ENCODE measurements at regions of chr1 and their contacts with region 1.

Region 1: DNA sequence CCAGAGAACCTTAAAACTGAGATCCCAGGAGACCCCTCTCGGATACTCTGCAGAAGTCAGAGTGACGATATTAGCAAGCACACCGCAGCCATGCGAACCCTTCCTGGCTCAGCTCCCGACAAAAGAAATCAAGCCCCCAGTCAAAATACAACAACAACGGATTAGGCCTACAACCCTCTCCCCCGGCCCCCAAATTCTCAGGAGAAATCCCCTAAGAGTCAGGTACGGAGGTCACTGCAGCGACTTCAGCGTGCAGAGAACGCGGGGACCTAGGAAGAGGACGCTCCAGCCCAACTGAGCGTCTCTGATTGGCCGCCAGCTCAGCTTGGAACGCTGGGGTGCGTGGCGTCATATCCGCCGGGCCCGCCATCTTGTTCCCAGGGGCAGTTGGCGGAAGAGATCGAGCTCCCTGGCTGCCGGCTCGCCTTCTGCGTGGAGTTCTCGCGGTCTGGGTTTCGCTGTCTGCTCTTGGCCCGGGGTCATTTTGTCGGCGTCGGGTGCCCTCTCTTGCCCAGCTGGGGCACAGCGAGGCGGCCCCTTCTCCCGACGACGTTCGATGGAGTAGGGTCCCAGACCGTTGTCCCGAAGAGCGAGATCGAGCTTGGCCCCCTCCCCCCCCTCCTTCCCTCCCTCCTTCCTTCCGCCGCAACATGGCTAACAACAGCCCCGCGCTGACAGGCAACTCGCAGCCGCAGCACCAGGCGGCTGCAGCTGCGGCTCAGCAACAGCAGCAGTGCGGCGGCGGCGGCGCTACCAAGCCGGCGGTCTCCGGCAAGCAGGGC is at the start of gene PRPF38B:
- DNase-seq: peak; percentile 97
- H3K4me3 Mint-ChIP-seq: peak within 1 kb of the TSS; percentile 86
- H3K27ac Mint-ChIP-seq: peak within 1 kb of the TSS; percentile 98
- H3K4me1 Mint-ChIP-seq: peaks cover 37% of the 10 kb centered on the region
- H3K27me3 Mint-ChIP-seq: no peaks in the 10 kb centered on the region
- total RNA-seq, gene PRPF38B: 50.4 to 52.2 TPM

Region 2: GRCh38 chr1:108512239-108512981 is 179.7 kb before region 1 on chr1:
- CTCF ChIA-PET with region 1: no interaction called
- intact Hi-C with region 1: loop called (anchors 5 kb)
- DNase-seq: no peak
- H3K4me3 Mint-ChIP-seq: no peak overlapping the region
- H3K27ac Mint-ChIP-seq: no peak overlapping the region
- H3K4me1 Mint-ChIP-seq: no peaks in the 10 kb centered on the region
- H3K27me3 Mint-ChIP-seq: peaks cover 1% of the 10 kb centered on the region

Region 3: GRCh38 chr1:108643492-108644335 is 48.4 kb before region 1 on chr1:
- CTCF ChIA-PET with region 1: interaction called, 28 read pairs
- intact Hi-C with region 1: loop called (anchors 1 kb)
- DNase-seq: peak; percentile 71
- H3K4me3 Mint-ChIP-seq: no peak overlapping the region
- H3K27ac Mint-ChIP-seq: no peak overlapping the region
- H3K4me1 Mint-ChIP-seq: peaks cover 60% of the 10 kb centered on the region
- H3K27me3 Mint-ChIP-seq: no peaks in the 10 kb centered on the region

Region 4: GRCh38 chr1:108746372-108747205 is 54.5 kb after region 1 on chr1 and contains the start of gene STXBP3:
- CTCF ChIA-PET with region 1: no interaction called
- intact Hi-C with region 1: loop called (anchors 1 kb)
- DNase-seq: peak; percentile 100
- H3K4me3 Mint-ChIP-seq: peak within 1 kb of the TSS; percentile 94
- H3K27ac Mint-ChIP-seq: peak within 1 kb of the TSS; percentile 92
- H3K4me1 Mint-ChIP-seq: peaks cover 28% of the 10 kb centered on the region
- H3K27me3 Mint-ChIP-seq: no peaks in the 10 kb centered on the region
- total RNA-seq, gene STXBP3: 29.1 to 30.3 TPM

Region 5: DNA sequence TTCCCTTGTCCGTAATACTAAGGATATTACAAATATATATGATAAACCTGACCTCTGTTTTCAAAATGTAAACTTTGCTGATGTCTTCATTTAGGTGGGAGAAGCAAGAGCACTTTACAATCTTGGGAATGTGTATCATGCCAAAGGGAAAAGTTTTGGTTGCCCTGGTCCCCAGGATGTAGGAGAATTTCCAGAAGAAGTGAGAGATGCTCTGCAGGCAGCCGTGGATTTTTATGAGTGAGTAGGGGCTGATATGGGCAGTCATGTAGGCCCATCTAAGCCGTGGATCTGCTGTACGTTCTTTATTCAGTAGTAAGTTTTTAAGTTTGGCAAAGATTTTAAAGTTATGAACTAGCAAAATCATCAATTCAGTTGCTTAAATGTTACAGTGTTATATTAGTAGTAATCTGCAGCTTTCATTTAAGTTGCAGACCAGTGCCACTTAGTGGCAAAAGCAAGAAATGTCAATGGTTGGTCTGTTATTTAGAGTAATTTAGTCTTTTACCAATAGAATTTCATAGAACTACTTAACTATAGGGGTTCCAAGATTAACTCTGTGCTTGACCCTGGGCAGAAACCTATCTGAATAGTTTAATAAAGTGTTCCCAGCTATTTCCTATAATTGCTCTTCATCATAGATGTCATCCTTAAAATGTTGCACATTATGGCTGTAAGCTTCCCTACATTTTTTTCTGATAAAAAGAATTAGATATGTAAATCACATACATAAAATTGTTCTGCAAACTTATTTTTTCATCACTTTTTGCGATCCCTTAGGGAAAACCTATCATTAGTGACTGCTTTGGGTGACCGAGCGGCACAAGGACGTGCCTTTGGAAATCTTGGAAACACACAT is 206.0 kb after region 1 on chr1:
- CTCF ChIA-PET with region 1: no interaction called
- intact Hi-C with region 1: loop called (anchors 1 kb)
- DNase-seq: peak; percentile 43
- H3K4me3 Mint-ChIP-seq: no peak overlapping the region
- H3K27ac Mint-ChIP-seq: no peak overlapping the region
- H3K4me1 Mint-ChIP-seq: no peaks in the 10 kb centered on the region
- H3K27me3 Mint-ChIP-seq: peaks cover 2% of the 10 kb centered on the region

Region 6: GRCh38 chr1:109090196-109091077 is 398.3 kb after region 1 on chr1 and contains the start of gene TMEM167B:
- CTCF ChIA-PET with region 1: no interaction called
- intact Hi-C with region 1: loop called (anchors 1 kb)
- DNase-seq: peak; percentile 95
- H3K4me3 Mint-ChIP-seq: peak within 1 kb of the TSS; percentile 82
- H3K27ac Mint-ChIP-seq: peak within 1 kb of the TSS; percentile 87
- H3K4me1 Mint-ChIP-seq: peaks cover 29% of the 10 kb centered on the region
- H3K27me3 Mint-ChIP-seq: no peaks in the 10 kb centered on the region
- total RNA-seq, gene TMEM167B: 35.0 to 37.6 TPM

Region 7: DNA sequence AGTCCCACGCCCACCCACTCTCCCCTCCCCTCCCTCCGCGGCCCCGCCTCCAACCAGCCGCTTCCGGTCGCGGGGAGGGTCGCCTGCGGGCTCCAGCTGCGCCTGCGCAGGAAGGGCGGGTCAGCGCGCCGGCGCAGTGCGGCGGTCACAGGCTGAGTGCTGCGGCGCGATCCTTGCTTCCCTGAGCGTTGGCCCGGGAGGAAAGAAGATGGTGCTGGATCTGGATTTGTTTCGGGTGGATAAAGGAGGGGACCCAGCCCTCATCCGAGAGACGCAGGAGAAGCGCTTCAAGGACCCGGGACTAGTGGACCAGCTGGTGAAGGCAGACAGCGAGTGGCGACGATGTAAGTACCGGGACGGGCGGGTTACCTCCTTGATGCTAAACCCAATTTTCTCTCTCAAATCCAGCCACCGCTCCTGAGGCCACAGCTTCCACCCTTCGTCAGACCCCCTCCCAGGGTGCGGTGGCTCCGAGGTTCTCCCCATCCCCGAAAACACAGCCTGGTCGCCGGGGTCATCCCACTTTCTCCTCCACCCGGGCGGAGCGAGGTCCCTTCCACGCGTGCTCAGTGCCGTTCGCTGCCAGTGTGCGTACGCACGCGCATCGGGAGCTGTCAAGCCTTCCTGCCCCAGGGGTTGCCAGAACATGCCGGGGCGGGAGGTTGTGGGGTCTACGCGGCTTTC is 521.8 kb after region 1 on chr1 and contains the start of gene SARS1:
- CTCF ChIA-PET with region 1: no interaction called
- intact Hi-C with region 1: loop called (anchors 1 kb)
- DNase-seq: peak; percentile 90
- H3K4me3 Mint-ChIP-seq: peak within 1 kb of the TSS; percentile 100
- H3K27ac Mint-ChIP-seq: peak within 1 kb of the TSS; percentile 100
- H3K4me1 Mint-ChIP-seq: peaks cover 24% of the 10 kb centered on the region
- H3K27me3 Mint-ChIP-seq: no peaks in the 10 kb centered on the region
- total RNA-seq, gene SARS1: 363 TPM